Naive thymus-derived CD8-positive, alpha-beta T cell (primary cell): ENCODE measurements at regions of chr3 and their contacts with region 1.

Region 1: GRCh38 chr3:50227390-50228183 is 8.4 kb upstream of the GNAI2 start:
- DNase-seq: peak; percentile 85 to 94 (median 92)
- ATAC-seq: peak; percentile 83 to 84
- H3K4me3 Mint-ChIP-seq: peak overlapping the region; percentile 90 to 99 (median 95)
- H3K27ac Mint-ChIP-seq: peak overlapping the region; percentile 88 to 96 (median 95)
- H3K4me1 Mint-ChIP-seq: peaks cover 21 to 50% (median 27%) of the 10 kb centered on the region in 4 donors
- H3K27me3 Mint-ChIP-seq: peaks cover 0 to 3% (median 0%) of the 10 kb centered on the region in 5 donors

Region 2: GRCh38 chr3:50260027-50260941 is 32.7 kb after region 1 on chr3:
- POLR2A ChIA-PET with region 1: interaction called, 11 read pairs
- DNase-seq: peak; percentile 65 to 87 (median 81)
- ATAC-seq: peak; percentile 94 to 95
- H3K4me3 Mint-ChIP-seq: peak overlapping the region; percentile 61 to 85 (median 75)
- H3K27ac Mint-ChIP-seq: peak overlapping the region in 8 of 10 donors; percentile 39 to 93 (median 87)
- H3K4me1 Mint-ChIP-seq: peaks cover 2 to 14% (median 10%) of the 10 kb centered on the region in 4 donors
- H3K27me3 Mint-ChIP-seq: no peaks in the 10 kb centered on the region

Region 3: GRCh38 chr3:50278868-50279224 is 51.3 kb after region 1 on chr3 and contains the start of gene LSMEM2:
- POLR2A ChIA-PET with region 1: no interaction called
- DNase-seq: no peak
- ATAC-seq: no peak
- H3K4me3 Mint-ChIP-seq: no peak within 1 kb of the TSS
- H3K27ac Mint-ChIP-seq: no peak within 1 kb of the TSS
- H3K4me1 Mint-ChIP-seq: peaks cover 14 to 22% (median 19%) of the 10 kb centered on the region in 4 donors
- H3K27me3 Mint-ChIP-seq: peaks cover 10 to 34% (median 17%) of the 10 kb centered on the region in 5 donors
- polyA plus RNA-seq, gene LSMEM2: 0.15 to 0.21 TPM in 2 of 3 donors, not detected in the other